ENCODE measurements at regions of chr1 and their contacts with region 1.

Region 1: GRCh38 chr1:155688324-155689080 is at the start of gene YY1AP1:
- DNase-seq: peak; percentile 96
- ATAC-seq: peak; percentile 85
- H3K4me3 ChIP-seq: peak within 1 kb of the TSS; percentile 80 to 97 (median 95)
- H3K4me3 Mint-ChIP-seq: peak within 1 kb of the TSS; percentile 97
- H3K27ac ChIP-seq: peak within 1 kb of the TSS; percentile 72 to 97
- H3K27ac Mint-ChIP-seq: peak within 1 kb of the TSS; percentile 97
- H3K4me1 ChIP-seq: peaks cover 16 to 19% of the 10 kb centered on the region in 2 donors
- H3K4me1 Mint-ChIP-seq: peaks cover 52% of the 10 kb centered on the region
- H3K27me3 ChIP-seq: no peaks in the 10 kb centered on the region
- H3K27me3 Mint-ChIP-seq: no peaks in the 10 kb centered on the region
- CTCF ChIP-seq: no peak
- total RNA-seq, gene YY1AP1: 132 and 156 TPM in 2 replicates

Region 2: GRCh38 chr1:155308493-155309422 is 379.7 kb before region 1 on chr1 and contains the start of gene FDPS:
- CTCF ChIA-PET with region 1: no interaction called
- POLR2A ChIA-PET with region 1: no interaction called
- intact Hi-C with region 1: loop called (anchors 2 kb)
- DNase-seq: peak; percentile 99
- ATAC-seq: peak; percentile 99
- H3K4me3 ChIP-seq: peak within 1 kb of the TSS; percentile 62 to 100 (median 88)
- H3K4me3 Mint-ChIP-seq: peak within 1 kb of the TSS; percentile 93
- H3K27ac ChIP-seq: peak within 1 kb of the TSS; percentile 91 to 94
- H3K27ac Mint-ChIP-seq: peak within 1 kb of the TSS; percentile 93
- H3K4me1 ChIP-seq: peaks cover 10 to 23% of the 10 kb centered on the region in 2 donors
- H3K4me1 Mint-ChIP-seq: peaks cover 27% of the 10 kb centered on the region
- H3K27me3 ChIP-seq: no peaks in the 10 kb centered on the region
- H3K27me3 Mint-ChIP-seq: no peaks in the 10 kb centered on the region
- CTCF ChIP-seq: no peak
- total RNA-seq, gene FDPS: 128 and 141 TPM in 2 replicates

Region 3: GRCh38 chr1:155744711-155745283 is 56.3 kb after region 1 on chr1:
- CTCF ChIA-PET with region 1: no interaction called
- POLR2A ChIA-PET with region 1: no interaction called
- intact Hi-C with region 1: loop called (anchors 2 kb)
- DNase-seq: no peak
- ATAC-seq: no peak
- H3K4me3 ChIP-seq: peak overlapping the region; percentile 64 to 91 (median 80)
- H3K4me3 Mint-ChIP-seq: peak overlapping the region; percentile 98
- H3K27ac ChIP-seq: peak overlapping the region; percentile 69 to 76
- H3K27ac Mint-ChIP-seq: peak overlapping the region; percentile 97
- H3K4me1 ChIP-seq: peaks cover 5 to 6% of the 10 kb centered on the region in 2 donors
- H3K4me1 Mint-ChIP-seq: peaks cover 5% of the 10 kb centered on the region
- H3K27me3 ChIP-seq: no peaks in the 10 kb centered on the region
- H3K27me3 Mint-ChIP-seq: no peaks in the 10 kb centered on the region
- CTCF ChIP-seq: no peak

Region 4: GRCh38 chr1:155911156-155912055 is 222.9 kb after region 1 on chr1 and contains the start of gene RIT1:
- CTCF ChIA-PET with region 1: no interaction called
- POLR2A ChIA-PET with region 1: no interaction called
- intact Hi-C with region 1: loop called (anchors 2 kb)
- DNase-seq: peak; percentile 91
- ATAC-seq: peak; percentile 98
- H3K4me3 ChIP-seq: peak within 1 kb of the TSS; percentile 64 to 90 (median 71)
- H3K4me3 Mint-ChIP-seq: peak within 1 kb of the TSS; percentile 96
- H3K27ac ChIP-seq: peak within 1 kb of the TSS; percentile 59 to 79
- H3K27ac Mint-ChIP-seq: peak within 1 kb of the TSS; percentile 97
- H3K4me1 ChIP-seq: peaks cover 14 to 16% of the 10 kb centered on the region in 2 donors
- H3K4me1 Mint-ChIP-seq: peaks cover 23% of the 10 kb centered on the region
- H3K27me3 ChIP-seq: no peaks in the 10 kb centered on the region
- H3K27me3 Mint-ChIP-seq: no peaks in the 10 kb centered on the region
- CTCF ChIP-seq: no peak
- total RNA-seq, gene RIT1: 43.4 and 45.7 TPM in 2 replicates